CD4-positive, alpha-beta memory T cell (primary cell): ENCODE measurements at regions of chr3 and their contacts with region 1.

Region 1: DNA sequence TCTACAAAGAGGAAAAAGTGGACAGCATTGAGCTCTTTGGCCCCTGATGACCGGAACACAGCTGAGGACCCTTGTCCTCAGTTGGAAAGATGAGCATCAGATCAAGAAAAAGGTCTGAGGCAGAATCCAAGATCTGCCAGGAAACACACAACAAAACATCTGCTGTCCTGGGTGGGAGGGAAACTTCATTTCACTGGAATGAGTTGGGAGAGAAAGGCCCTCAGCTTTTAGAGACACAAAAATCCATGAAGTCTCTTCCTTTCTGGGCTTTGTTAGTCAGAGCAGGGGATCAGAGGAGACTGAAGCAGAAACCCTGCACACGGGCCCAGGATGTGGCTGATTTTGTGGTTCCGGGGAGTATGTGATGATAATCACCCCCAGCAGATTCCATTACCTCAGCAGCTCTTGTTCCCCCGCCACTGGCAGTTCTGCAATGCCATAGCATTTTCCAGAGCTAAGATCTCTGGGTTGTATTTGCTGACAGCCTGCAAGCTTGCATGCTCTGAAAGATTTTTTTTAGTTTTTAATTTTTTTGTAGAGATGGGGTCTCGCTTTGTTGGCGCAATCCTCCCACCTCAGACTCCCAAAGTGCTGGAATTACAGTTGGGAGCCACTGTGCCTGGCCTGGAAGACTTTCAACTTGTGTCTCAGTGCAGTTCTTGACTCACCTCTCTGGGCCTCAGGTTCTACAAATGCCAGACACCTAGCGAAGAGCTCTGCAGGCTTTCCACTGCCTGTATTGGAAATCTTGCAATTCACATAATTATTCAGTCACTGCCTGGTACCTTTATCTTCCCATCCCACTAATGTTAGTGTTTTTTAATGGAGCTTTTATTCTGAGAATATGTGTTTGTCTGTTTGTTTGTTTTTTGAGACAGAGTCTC is 5.8 kb upstream of the TATDN2 start:
- DNase-seq: peak; percentile 80 to 94 (median 83)
- H3K4me3 ChIP-seq: peak overlapping the region; percentile 34 to 36
- H3K4me3 Mint-ChIP-seq: peak overlapping the region; percentile 77 to 90 (median 80)
- H3K27ac ChIP-seq: peak overlapping the region; percentile 47
- H3K27ac Mint-ChIP-seq: peak overlapping the region; percentile 89 to 97 (median 95)
- H3K4me1 ChIP-seq: peaks cover 54% of the 10 kb centered on the region
- H3K4me1 Mint-ChIP-seq: peaks cover 37 to 67% (median 53%) of the 10 kb centered on the region in 4 donors
- H3K27me3 ChIP-seq: no peaks in the 10 kb centered on the region
- H3K27me3 Mint-ChIP-seq: no peaks in the 10 kb centered on the region

Region 2: GRCh38 chr3:10219737-10220136 is 22.7 kb before region 1 on chr3:
- CTCF ChIA-PET with region 1: interaction called, 5 read pairs
- POLR2A ChIA-PET with region 1: interaction called, 14 read pairs
- intact Hi-C with region 1: loop called (anchors 2 kb)
- DNase-seq: no peak
- H3K4me3 ChIP-seq: no peak overlapping the region
- H3K4me3 Mint-ChIP-seq: no peak overlapping the region
- H3K27ac ChIP-seq: no peak overlapping the region
- H3K27ac Mint-ChIP-seq: peak overlapping the region in 5 of 7 donors; percentile 26 to 92 (median 67)
- H3K4me1 ChIP-seq: peaks cover 45% of the 10 kb centered on the region
- H3K4me1 Mint-ChIP-seq: peaks cover 28 to 50% (median 40%) of the 10 kb centered on the region in 4 donors
- H3K27me3 ChIP-seq: no peaks in the 10 kb centered on the region
- H3K27me3 Mint-ChIP-seq: no peaks in the 10 kb centered on the region

Region 3: DNA sequence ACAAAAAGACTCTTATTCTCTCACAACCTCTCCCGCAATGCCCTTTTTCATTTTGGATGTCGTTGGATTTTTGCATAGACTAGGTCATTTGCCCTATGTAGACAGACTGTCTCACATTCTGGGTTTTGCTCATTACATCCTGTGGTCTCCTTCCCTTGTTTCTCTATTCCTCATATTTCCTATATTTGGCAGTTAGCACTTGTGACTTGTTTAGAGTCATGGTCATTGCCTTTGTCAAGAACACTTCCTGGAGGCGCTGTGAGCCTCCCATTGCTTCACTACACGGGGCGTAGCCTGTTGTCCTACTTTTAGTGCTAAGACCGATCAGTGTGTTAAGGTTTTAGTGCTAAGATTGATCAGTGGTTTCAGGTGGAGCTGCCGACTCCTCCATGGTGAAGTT is 10.3 kb before region 1 on chr3:
- CTCF ChIA-PET with region 1: interaction called, 4 read pairs
- POLR2A ChIA-PET with region 1: interaction called, 10 read pairs
- intact Hi-C with region 1: no loop called
- DNase-seq: no peak
- H3K4me3 ChIP-seq: no peak overlapping the region
- H3K4me3 Mint-ChIP-seq: peak overlapping the region in 7 of 8 donors; percentile 30 to 71 (median 60)
- H3K27ac ChIP-seq: no peak overlapping the region
- H3K27ac Mint-ChIP-seq: peak overlapping the region in 5 of 7 donors; percentile 18 to 73 (median 72)
- H3K4me1 ChIP-seq: peaks cover 20% of the 10 kb centered on the region
- H3K4me1 Mint-ChIP-seq: peaks cover 20 to 31% (median 24%) of the 10 kb centered on the region in 4 donors
- H3K27me3 ChIP-seq: no peaks in the 10 kb centered on the region
- H3K27me3 Mint-ChIP-seq: no peaks in the 10 kb centered on the region

Region 4: DNA sequence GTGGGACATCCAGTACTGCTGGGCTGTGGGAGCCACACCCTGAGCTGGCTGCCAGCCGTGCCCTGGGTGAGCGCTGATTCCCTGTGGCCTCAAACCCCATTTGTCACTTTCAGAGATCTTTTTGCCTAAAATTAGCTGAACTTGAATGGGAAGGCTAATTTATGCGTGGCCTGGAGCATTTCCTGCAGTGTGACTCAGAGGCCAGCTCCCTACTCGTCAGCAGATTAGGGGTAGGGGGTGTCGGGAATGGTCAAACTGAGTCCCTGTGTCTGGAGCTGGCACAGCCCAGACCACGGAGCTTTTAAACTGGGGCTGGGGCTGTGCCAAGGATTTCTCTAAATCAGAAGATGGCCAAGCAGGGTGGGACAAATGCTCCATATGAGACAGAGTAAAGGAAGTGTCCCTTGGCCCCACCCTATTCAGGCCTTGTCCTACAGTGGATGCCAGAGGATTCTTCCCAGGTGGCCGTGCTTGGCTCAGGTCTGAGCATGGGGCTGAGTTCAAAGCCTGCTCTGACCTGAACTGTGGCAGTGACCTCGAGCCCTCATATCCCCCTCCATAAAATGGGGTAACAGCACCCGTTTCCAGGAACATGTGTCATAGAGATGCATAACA is 203.2 kb after region 1 on chr3:
- CTCF ChIA-PET with region 1: no interaction called
- POLR2A ChIA-PET with region 1: no interaction called
- intact Hi-C with region 1: no loop called
- DNase-seq: no peak
- H3K4me3 ChIP-seq: no peak overlapping the region
- H3K4me3 Mint-ChIP-seq: no peak overlapping the region
- H3K27ac ChIP-seq: no peak overlapping the region
- H3K27ac Mint-ChIP-seq: no peak overlapping the region
- H3K4me1 ChIP-seq: no peaks in the 10 kb centered on the region
- H3K4me1 Mint-ChIP-seq: peaks cover 0 to 1% (median 0%) of the 10 kb centered on the region in 4 donors
- H3K27me3 ChIP-seq: no peaks in the 10 kb centered on the region
- H3K27me3 Mint-ChIP-seq: peaks cover 0 to 2% of the 10 kb centered on the region in 2 donors